PC-9 (cell line): ENCODE measurements at regions of chr11 and their contacts with region 1.

Region 1: DNA sequence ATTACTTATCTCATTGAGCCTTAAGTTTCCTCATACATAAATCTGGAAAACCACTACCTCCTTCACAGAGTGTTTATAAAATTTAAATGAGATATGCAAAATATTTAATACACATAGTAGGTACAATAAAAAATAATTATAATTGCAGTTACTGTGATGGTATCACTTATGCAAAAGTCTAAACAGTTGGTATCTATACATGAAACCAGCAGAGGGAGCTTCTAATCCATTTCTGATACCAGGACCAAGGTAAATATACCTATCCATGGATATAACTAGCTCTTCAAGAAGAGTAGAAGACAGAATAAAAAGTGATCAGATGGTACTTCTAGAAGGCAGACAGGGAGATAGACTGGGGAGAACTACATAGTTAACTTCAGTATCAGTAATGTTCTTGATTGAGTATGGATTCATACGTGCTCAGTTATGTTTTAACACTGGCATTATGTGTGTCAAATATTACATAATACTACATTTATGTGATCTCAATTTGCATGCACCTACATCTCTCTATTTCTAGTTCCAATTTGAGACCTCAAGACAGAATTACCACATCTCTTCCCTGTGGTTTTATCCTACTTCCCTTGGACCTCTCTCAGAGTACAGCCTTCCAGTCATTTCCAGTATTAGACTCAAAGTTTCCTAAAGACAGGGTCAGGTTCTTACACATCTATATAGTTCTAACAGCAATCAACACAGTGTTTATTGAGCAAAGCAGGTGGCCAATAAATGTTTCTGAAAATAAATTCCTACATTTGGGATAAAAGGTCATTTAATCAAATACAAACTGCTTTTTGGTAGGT is 13.7 kb upstream of the TSG101 start:
- DNase-seq: peak in 1 of 2 experiments; percentile 51
- H3K4me3 ChIP-seq: no peak overlapping the region
- H3K27ac ChIP-seq: no peak overlapping the region
- H3K4me1 ChIP-seq: no peaks in the 10 kb centered on the region
- H3K27me3 ChIP-seq: no peaks in the 10 kb centered on the region
- CTCF ChIP-seq: peak; percentile 78

Region 2: DNA sequence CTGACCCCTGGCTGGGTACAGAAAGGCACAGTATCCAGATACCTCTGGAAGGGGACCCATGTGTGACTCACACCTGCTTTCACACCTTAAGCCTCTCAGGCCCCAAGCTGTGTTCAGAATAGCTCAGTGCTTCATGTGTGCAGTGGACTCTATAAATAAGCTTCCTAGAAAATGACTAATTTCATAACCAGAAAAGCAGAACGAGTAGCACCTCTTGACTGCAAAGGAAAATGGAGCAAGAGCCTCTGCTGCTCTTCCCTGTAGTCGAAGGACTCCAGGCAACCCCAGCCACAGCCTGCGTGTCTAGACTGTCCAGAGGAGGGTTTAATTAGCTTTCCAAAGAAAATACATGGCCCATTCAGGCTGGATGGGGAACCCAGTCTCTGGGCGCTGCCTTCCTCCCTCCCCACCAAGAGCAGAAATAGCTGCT is 228.1 kb after region 1 on chr11:
- CTCF ChIA-PET with region 1: interaction called, 11 read pairs
- POLR2A ChIA-PET with region 1: no interaction called
- intact Hi-C with region 1: loop called (anchors 1 kb)
- DNase-seq: no peak
- H3K4me3 ChIP-seq: no peak overlapping the region
- H3K27ac ChIP-seq: no peak overlapping the region
- H3K4me1 ChIP-seq: peaks cover 7% of the 10 kb centered on the region
- H3K27me3 ChIP-seq: peaks cover 21% of the 10 kb centered on the region
- CTCF ChIP-seq: no peak